Naive thymus-derived CD4-positive, alpha-beta T cell (primary cell): ENCODE measurements at regions of chr11 and their contacts with region 1.

Region 1: DNA sequence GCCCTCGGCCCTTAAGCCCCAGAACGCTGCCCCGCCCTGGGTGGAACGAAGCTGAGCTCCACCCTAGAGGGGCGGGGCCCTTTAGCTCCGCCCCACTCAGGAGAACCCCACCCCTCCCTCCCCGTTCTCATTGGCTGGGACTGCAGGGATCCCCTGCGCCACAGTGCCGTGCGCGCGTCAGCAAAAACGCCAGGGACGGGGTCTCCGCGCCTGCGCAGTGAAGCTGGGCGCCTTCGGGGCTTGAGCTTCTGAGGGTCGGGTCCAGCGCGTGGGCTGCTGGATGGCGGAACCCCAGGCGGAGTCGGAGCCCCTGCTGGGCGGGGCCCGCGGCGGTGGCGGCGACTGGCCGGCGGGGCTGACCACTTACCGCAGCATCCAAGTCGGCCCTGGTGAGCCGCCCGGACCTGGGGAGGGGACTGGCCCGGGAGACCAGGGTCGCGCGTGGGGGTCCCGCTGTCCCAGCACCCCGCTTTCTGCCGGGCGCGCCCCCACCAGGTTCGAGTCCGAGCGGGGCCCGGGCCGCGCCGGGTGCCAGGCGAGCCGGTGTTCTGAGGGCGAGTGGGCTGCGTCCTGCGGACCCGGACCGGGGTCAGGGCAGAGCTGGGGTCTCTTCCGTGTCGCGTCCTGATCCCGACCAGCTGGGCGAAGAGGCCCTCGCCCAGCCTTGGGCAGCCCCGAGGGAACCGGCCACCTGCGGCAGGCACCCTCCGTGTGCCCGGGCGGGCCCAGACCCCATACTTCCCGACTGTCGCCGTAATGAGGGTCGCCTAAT is at the start of gene TPCN2:
- DNase-seq: peak; percentile 87 to 93 (median 91)
- ATAC-seq: peak; percentile 99
- H3K4me3 ChIP-seq: peak within 1 kb of the TSS; percentile 85
- H3K4me3 Mint-ChIP-seq: peak within 1 kb of the TSS; percentile 75 to 87 (median 82)
- H3K27ac ChIP-seq: peak within 1 kb of the TSS; percentile 98
- H3K27ac Mint-ChIP-seq: peak within 1 kb of the TSS; percentile 82 to 94 (median 89)
- H3K4me1 ChIP-seq: peaks cover 12 to 16% of the 10 kb centered on the region in 2 donors
- H3K4me1 Mint-ChIP-seq: peaks cover 4 to 35% (median 29%) of the 10 kb centered on the region in 7 donors
- H3K27me3 ChIP-seq: no peaks in the 10 kb centered on the region
- H3K27me3 Mint-ChIP-seq: peaks cover 0 to 27% (median 0%) of the 10 kb centered on the region in 5 donors
- total RNA-seq, gene TPCN2: 11.9 to 29.4 (median 21.3) TPM

Region 2: DNA sequence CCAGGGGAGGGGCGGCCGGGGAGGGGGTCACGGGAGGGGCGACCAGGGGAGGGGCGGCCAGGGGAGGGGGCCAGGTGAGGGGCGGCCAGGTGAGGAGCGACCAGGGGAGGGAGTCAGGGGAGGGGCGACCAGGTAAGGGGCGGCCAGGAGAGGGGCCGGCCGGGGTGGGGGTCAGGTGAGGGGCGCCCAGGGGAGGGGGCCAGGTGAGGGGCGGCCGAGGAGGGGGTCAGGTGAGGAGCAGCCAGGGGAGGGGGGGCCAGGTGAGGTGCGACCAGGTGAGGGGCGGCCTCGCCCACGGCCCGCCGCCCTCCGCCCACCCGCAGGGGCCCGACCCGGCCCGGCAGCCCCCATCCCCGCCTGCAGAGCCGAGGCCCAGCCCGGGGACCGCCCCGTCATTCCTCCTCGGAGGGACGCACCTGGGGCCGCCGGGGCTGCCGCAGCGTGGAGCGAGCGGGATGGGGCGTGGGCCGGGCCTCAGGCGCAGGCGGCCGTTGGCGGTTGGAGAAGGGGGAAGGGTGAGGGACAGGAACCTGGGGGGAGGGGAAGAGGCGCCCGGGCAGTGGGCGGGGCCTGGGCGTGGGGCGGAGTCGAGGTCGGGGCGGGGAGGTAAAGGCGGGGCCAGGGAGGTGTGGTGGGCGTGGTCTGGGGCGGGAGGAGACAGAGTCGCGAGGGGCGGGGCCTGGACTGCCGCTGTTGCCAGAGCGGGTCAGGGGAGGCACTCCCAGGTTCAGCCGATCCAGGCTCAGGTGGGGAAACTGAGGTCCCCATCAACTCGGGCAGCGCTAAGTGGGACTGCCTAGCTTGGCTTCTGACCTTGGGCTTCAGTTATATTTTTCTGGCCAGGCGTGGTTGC is 297.7 kb before region 1 on chr11 and contains the start of gene TESMIN:
- CTCF ChIA-PET with region 1: no interaction called
- POLR2A ChIA-PET with region 1: no interaction called
- intact Hi-C with region 1: loop called (anchors 1 kb)
- DNase-seq: peak; percentile 73 to 97 (median 88)
- ATAC-seq: peak; percentile 99
- H3K4me3 ChIP-seq: peak within 1 kb of the TSS; percentile 54
- H3K4me3 Mint-ChIP-seq: peak within 1 kb of the TSS; percentile 65 to 90 (median 78)
- H3K27ac ChIP-seq: no peak within 1 kb of the TSS
- H3K27ac Mint-ChIP-seq: peak within 1 kb of the TSS in 8 of 9 donors; percentile 5 to 84 (median 66)
- H3K4me1 ChIP-seq: no peaks in the 10 kb centered on the region
- H3K4me1 Mint-ChIP-seq: peaks cover 7 to 19% (median 13%) of the 10 kb centered on the region in 7 donors
- H3K27me3 ChIP-seq: no peaks in the 10 kb centered on the region
- H3K27me3 Mint-ChIP-seq: peaks cover 0 to 7% (median 0%) of the 10 kb centered on the region in 5 donors
- total RNA-seq, gene TESMIN: 5.0 to 9.3 (median 6.6) TPM

Region 3: GRCh38 chr11:69027704-69028372 is 21.1 kb before region 1 on chr11:
- CTCF ChIA-PET with region 1: no interaction called
- POLR2A ChIA-PET with region 1: no interaction called
- intact Hi-C with region 1: no loop called
- DNase-seq: no peak
- ATAC-seq: no peak
- H3K4me3 ChIP-seq: no peak overlapping the region
- H3K4me3 Mint-ChIP-seq: no peak overlapping the region
- H3K27ac ChIP-seq: no peak overlapping the region
- H3K27ac Mint-ChIP-seq: no peak overlapping the region
- H3K4me1 ChIP-seq: no peaks in the 10 kb centered on the region
- H3K4me1 Mint-ChIP-seq: peaks cover 0 to 2% (median 0%) of the 10 kb centered on the region in 7 donors
- H3K27me3 ChIP-seq: no peaks in the 10 kb centered on the region
- H3K27me3 Mint-ChIP-seq: peaks cover 0 to 2% (median 0%) of the 10 kb centered on the region in 5 donors

Region 4: DNA sequence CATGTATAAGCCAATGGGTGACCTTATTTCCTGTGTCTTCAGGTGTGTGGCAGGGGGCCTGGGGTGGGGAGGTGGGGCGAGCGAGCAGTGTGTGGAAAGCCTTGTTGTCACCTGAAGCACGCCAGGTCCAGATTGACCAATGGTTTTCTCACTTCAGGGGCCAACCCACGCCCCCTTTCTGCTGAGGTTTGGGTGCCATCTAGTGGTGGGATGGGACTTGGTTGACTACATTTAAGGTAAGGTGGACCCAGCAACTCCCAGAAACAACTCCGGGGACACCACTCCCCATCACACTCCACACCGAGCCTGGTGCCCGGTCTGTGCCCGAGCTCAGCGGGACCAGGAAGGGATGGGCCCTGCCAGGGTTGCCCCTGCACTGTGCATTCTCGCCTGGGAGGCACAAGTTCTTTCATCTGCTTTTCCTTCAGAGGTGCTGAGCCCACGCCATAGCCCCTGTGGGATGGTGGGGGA is 39.8 kb after region 1 on chr11:
- CTCF ChIA-PET with region 1: no interaction called
- POLR2A ChIA-PET with region 1: no interaction called
- intact Hi-C with region 1: loop called in 1 of 2 experiments (anchors 2 kb)
- DNase-seq: peak in 7 of 9 donors; percentile 23 to 54 (median 38)
- ATAC-seq: peak; percentile 78
- H3K4me3 ChIP-seq: no peak overlapping the region
- H3K4me3 Mint-ChIP-seq: no peak overlapping the region
- H3K27ac ChIP-seq: no peak overlapping the region
- H3K27ac Mint-ChIP-seq: peak overlapping the region in 2 of 9 donors; percentile 19 to 36
- H3K4me1 ChIP-seq: no peaks in the 10 kb centered on the region
- H3K4me1 Mint-ChIP-seq: peaks cover 0 to 9% (median 0%) of the 10 kb centered on the region in 7 donors
- H3K27me3 ChIP-seq: no peaks in the 10 kb centered on the region
- H3K27me3 Mint-ChIP-seq: no peaks in the 10 kb centered on the region

Region 5: DNA sequence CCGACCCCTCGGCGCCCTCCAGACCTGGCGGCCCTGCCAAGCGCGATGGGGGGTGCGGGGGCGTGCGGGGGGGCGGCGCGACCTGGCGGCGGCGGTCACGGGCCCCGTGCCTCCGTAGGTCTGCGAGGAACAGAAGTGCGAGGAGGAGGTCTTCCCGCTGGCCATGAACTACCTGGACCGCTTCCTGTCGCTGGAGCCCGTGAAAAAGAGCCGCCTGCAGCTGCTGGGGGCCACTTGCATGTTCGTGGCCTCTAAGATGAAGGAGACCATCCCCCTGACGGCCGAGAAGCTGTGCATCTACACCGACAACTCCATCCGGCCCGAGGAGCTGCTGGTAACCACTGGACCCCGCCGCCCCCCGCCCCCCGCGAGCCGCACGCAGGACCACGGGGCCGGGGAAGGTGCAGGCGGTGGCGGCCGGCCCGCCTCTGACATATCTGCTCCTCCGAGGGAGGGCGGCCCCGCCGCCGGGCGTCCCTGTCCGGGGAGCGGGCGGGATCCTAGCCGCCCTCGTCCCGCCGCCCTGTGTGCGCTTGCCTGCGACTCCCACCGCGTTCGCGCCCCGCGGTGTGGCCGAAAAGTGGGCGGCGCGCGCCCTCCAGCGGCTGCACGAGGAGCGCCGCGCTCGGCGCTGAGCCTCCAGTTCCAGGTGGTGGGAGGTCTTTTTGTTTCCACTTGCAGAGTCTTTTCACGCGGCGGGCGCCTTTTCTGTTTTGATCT is 594.2 kb after region 1 on chr11:
- CTCF ChIA-PET with region 1: no interaction called
- POLR2A ChIA-PET with region 1: no interaction called
- intact Hi-C with region 1: loop called in 1 of 2 experiments (anchors 1 kb)
- DNase-seq: peak; percentile 57 to 88 (median 83)
- ATAC-seq: peak; percentile 90
- H3K4me3 ChIP-seq: peak overlapping the region; percentile 61
- H3K4me3 Mint-ChIP-seq: peak overlapping the region; percentile 49 to 95 (median 78)
- H3K27ac ChIP-seq: peak overlapping the region; percentile 48
- H3K27ac Mint-ChIP-seq: peak overlapping the region in 1 of 9 donors; percentile 41
- H3K4me1 ChIP-seq: peaks cover 3 to 21% of the 10 kb centered on the region in 2 donors
- H3K4me1 Mint-ChIP-seq: peaks cover 12 to 30% (median 25%) of the 10 kb centered on the region in 7 donors
- H3K27me3 ChIP-seq: peaks cover 9 to 16% of the 10 kb centered on the region in 2 donors
- H3K27me3 Mint-ChIP-seq: peaks cover 23 to 29% (median 26%) of the 10 kb centered on the region in 5 donors

Region 6: DNA sequence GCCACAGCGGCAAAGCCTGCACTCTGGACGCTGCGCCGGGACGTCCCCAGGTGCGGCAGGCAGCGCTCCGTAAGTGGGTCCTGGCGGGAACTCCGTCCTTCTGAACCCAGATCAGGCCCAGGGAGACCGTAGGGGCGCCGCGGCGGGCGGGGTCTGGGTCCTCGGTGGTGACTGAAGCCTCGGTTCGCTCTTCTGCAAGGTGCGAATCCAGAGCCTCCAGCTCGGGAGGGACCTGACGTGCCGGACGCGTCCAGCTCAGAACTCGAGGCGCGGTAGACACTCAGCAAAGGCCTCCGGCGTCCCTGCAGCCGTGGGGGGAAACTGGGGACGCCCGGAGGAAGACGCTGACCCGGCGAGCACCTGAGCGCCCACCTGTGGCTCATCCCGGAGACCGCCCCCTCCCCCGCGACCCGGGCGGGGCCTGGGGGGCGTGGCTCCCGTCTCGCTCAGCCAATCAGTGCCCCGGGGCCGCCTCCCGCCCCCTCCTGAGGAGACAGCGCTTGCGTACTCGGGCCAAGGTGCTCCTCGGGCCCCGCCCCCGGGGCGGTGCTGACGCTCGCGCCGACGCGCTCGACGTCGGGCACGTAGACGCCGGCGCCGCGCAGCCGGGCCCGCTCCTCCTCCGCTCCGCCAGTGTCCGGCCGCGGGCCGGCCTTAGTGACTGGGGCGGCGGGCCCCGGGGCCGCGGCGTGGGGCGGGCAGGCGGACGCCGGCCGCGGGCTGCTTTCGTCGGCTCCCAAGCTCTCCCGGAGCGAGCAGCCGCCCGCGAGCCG is 1221.4 kb after region 1 on chr11 and contains the start of gene PPFIA1:
- CTCF ChIA-PET with region 1: no interaction called
- POLR2A ChIA-PET with region 1: no interaction called
- intact Hi-C with region 1: loop called in 1 of 2 experiments (anchors 2 kb)
- DNase-seq: peak; percentile 93 to 99 (median 96)
- ATAC-seq: peak; percentile 99
- H3K4me3 ChIP-seq: peak within 1 kb of the TSS; percentile 95
- H3K4me3 Mint-ChIP-seq: peak within 1 kb of the TSS; percentile 89 to 94 (median 92)
- H3K27ac ChIP-seq: peak within 1 kb of the TSS; percentile 83
- H3K27ac Mint-ChIP-seq: peak within 1 kb of the TSS; percentile 63 to 96 (median 88)
- H3K4me1 ChIP-seq: peaks cover 4 to 21% of the 10 kb centered on the region in 2 donors
- H3K4me1 Mint-ChIP-seq: peaks cover 13 to 52% (median 42%) of the 10 kb centered on the region in 7 donors
- H3K27me3 ChIP-seq: no peaks in the 10 kb centered on the region
- H3K27me3 Mint-ChIP-seq: peaks cover 8 to 31% (median 14%) of the 10 kb centered on the region in 5 donors
- total RNA-seq, gene PPFIA1: 41.5 to 71.0 (median 52.3) TPM